Activated CD8-positive, alpha-beta T cell treated with anti-CD3 and anti-CD28 coated beads for 36 hours (primary cell): ENCODE measurements at regions of chr22 and their contacts with region 1.

Region 1: DNA sequence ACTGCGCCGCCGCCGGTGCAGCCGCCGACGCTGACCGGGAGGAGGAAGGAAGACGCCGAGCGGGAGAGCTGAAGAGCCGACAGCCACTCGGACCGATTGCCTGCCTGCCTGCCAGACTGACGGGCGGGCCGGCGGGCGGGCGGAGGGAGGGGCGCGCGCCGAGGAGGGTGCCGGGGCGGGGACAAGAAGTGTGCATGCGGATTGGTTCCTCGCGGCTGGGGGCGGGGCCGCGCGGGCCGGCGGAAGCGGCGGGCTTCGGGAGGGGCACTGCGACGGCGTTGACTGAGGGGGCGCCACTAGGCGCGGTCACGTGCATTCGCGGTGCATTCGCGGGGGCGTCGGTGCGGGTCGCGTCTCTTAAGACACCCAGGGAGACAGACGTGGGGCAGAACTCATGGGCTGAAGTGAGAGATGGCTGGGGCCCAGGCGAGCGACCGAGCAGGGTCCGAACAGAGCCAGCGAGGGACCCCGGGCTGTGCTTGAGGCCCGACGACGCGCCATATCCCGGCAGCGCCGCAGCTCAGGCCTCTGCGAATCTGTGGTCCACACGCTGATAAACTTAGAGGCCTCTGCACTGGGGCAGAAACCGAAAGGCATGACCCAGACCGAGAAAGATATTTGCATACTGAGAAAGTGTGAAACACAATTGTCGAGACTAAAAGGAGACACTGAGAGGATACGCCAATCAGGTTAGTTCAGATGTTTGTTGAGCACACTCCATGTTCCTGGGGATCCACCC is at the start of gene MAPK1:
- DNase-seq: peak; percentile 96
- ATAC-seq: peak; percentile 92
- H3K4me3 Mint-ChIP-seq: peak within 1 kb of the TSS; percentile 96
- H3K27ac Mint-ChIP-seq: peak within 1 kb of the TSS; percentile 97
- H3K4me1 Mint-ChIP-seq: peaks cover 37% of the 10 kb centered on the region
- H3K27me3 Mint-ChIP-seq: no peaks in the 10 kb centered on the region
- CTCF ChIP-seq: no peak
- total RNA-seq, gene MAPK1: 87.1 to 93.4 TPM

Region 2: DNA sequence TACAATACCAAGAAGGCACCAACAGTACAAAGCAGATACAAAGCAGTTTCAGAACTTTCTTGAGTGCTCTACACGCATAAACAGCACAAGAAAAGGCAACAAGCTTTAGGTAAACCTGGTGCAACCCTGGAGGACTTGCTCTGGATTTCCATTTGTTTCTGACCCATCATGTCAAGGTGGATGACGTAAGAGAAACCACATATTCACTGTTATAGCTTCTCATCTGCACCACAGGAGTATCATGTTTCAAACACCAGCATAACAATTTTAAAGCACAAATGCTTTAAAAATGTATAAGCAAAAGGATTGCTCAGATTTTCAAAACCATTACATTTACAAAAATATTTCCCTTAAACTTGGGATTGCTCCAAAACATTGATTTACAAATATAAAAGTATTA is 107.1 kb before region 1 on chr22:
- CTCF ChIA-PET with region 1: no interaction called
- POLR2A ChIA-PET with region 1: interaction called, 8 read pairs
- intact Hi-C with region 1: loop called (anchors 5 kb)
- DNase-seq: no peak
- ATAC-seq: no peak
- H3K4me3 Mint-ChIP-seq: no peak overlapping the region
- H3K27ac Mint-ChIP-seq: no peak overlapping the region
- H3K4me1 Mint-ChIP-seq: peaks cover 55% of the 10 kb centered on the region
- H3K27me3 Mint-ChIP-seq: no peaks in the 10 kb centered on the region
- CTCF ChIP-seq: no peak

Region 3: DNA sequence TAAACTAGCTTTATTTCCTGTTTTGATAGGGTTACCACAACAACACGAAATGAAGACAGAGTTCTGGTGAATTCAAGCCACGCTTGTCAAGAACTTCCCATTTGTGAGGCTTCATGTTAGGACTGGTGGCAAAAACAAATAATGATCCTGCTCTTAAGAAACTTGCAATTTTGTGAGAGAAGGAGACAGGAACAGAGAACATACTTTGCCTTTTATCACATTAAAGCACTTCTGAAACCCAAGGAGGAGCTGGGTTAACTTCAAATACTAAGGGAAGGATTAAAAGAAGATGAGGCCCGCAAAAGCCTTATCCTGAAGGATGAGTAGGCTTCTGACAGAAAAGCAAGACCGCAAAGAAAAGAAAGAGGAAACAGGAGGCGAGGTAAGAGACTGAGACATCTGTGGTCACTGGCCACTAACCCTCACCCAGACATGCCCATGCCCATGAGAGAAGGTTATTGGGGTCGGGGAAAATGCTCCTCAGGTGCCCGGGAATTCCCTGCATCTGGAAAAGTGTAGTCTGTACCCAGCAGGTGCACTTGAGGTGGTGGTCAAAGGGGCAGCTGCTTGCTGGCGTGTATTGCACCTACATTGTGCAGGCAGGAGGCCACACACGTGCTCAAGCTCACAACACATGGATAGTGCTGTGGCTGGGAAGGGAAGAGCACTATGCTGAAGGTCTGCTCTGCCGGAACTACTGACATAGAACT is 50.8 kb before region 1 on chr22:
- CTCF ChIA-PET with region 1: no interaction called
- POLR2A ChIA-PET with region 1: interaction called, 3 read pairs
- intact Hi-C with region 1: loop called (anchors 10 kb)
- DNase-seq: peak; percentile 37
- ATAC-seq: peak; percentile 88
- H3K4me3 Mint-ChIP-seq: peak overlapping the region; percentile 46
- H3K27ac Mint-ChIP-seq: peak overlapping the region; percentile 84
- H3K4me1 Mint-ChIP-seq: peaks cover 64% of the 10 kb centered on the region
- H3K27me3 Mint-ChIP-seq: no peaks in the 10 kb centered on the region
- CTCF ChIP-seq: no peak